ENCODE measurements at regions of chr5 and their contacts with region 1.

Region 1: GRCh38 chr5:55771175-55771655 is 33.4 kb downstream of the DDX4 start:
- DNase-seq: no peak
- H3K4me3 Mint-ChIP-seq: no peak overlapping the region
- H3K27ac Mint-ChIP-seq: no peak overlapping the region
- H3K4me1 Mint-ChIP-seq: peaks cover 11% of the 10 kb centered on the region
- H3K27me3 Mint-ChIP-seq: no peaks in the 10 kb centered on the region

Region 2: DNA sequence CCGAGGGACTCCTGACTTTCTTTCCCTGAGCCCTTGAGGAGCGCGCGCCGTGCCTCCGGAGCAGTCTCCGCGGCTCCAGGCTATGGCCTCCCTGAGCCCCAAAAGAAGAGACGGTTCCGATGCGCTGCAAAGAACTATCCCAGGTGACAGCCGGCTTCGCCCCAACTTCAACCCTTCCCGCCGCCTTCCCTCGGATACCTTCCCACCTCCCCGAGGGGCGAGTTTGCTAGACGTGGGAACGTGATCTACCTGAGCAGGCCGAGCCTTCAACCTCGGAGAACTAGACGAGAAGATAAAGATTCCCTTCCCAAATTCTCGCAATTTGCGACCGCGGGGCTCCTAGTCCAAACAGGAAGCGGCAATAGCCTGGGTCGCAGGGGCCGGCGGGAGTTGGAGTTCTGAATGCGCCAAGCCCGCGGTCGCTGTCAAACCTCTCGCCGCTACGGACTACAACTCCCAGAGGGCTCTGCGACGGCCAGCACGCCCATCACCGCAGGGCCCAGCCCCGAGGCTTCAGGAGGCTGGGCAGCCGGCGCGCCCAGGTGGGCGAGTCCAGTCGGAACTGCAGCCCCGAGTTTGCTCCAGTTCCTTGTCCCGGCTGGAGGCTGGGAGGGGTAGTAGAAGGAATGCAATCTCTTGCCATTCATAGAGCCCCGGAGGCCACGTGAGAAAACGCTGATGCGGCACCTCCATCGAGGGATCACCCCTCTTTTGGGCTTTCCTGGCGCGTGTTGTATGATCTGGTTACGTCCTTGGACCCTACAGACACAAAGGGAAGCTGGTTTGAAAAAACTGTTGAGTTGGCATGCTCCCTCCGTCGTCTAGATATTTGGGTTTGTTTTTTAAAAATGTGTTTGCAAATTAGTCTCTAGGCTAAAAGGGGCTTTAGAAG is 59.0 kb before region 1 on chr5 and contains the start of gene SLC38A9:
- CTCF ChIA-PET with region 1: no interaction called
- POLR2A ChIA-PET with region 1: no interaction called
- intact Hi-C with region 1: loop called (anchors 5 kb)
- DNase-seq: peak; percentile 96
- H3K4me3 Mint-ChIP-seq: peak within 1 kb of the TSS; percentile 96
- H3K27ac Mint-ChIP-seq: peak within 1 kb of the TSS; percentile 80
- H3K4me1 Mint-ChIP-seq: peaks cover 33% of the 10 kb centered on the region
- H3K27me3 Mint-ChIP-seq: no peaks in the 10 kb centered on the region
- total RNA-seq, gene SLC38A9: 14.2 to 15.0 TPM

Region 3: GRCh38 chr5:55758231-55758630 is 13.0 kb before region 1 on chr5:
- CTCF ChIA-PET with region 1: interaction called, 3 read pairs
- POLR2A ChIA-PET with region 1: no interaction called
- intact Hi-C with region 1: loop called (anchors 1 kb)
- DNase-seq: no peak
- H3K4me3 Mint-ChIP-seq: no peak overlapping the region
- H3K27ac Mint-ChIP-seq: peak overlapping the region; percentile 23
- H3K4me1 Mint-ChIP-seq: peaks cover 20% of the 10 kb centered on the region
- H3K27me3 Mint-ChIP-seq: peaks cover 17% of the 10 kb centered on the region

Region 4: DNA sequence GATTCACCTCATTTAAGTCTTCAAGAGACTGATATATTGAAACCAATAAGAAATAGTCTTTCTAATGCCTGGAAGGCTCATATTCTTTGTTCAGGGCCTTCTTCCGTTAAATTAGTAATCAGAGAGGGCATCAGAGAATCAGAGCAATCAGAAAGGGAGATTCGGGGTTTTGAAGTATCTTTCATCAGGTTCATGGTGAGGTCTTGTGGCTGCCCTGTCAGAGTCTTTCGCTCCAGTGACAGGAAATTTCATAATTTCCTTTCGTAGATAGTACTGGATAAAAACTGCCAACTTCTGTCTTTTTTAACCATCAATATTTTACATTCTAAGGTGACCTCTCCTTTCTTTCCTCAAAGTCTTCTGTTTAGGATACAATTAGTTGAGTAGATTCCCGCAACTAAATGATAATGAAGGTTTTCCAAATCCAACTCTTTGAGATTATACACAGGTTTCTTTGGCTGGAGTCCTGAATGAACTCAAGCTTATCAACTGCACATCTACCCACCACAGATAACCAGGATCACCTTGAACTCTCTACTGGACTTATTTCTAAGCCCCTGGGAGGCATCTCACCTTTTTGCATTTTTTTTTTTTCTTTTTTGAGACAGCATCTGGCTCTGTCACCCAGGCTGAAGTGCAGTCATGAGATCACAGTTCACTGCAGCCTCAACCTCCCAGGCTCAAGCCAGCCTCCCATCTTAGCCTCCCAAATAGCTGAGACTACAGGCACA is 85.5 kb after region 1 on chr5:
- CTCF ChIA-PET with region 1: no interaction called
- POLR2A ChIA-PET with region 1: no interaction called
- intact Hi-C with region 1: loop called (anchors 2 kb)
- DNase-seq: peak; percentile 46
- H3K4me3 Mint-ChIP-seq: no peak overlapping the region
- H3K27ac Mint-ChIP-seq: peak overlapping the region; percentile 32
- H3K4me1 Mint-ChIP-seq: peaks cover 34% of the 10 kb centered on the region
- H3K27me3 Mint-ChIP-seq: no peaks in the 10 kb centered on the region

Region 5: DNA sequence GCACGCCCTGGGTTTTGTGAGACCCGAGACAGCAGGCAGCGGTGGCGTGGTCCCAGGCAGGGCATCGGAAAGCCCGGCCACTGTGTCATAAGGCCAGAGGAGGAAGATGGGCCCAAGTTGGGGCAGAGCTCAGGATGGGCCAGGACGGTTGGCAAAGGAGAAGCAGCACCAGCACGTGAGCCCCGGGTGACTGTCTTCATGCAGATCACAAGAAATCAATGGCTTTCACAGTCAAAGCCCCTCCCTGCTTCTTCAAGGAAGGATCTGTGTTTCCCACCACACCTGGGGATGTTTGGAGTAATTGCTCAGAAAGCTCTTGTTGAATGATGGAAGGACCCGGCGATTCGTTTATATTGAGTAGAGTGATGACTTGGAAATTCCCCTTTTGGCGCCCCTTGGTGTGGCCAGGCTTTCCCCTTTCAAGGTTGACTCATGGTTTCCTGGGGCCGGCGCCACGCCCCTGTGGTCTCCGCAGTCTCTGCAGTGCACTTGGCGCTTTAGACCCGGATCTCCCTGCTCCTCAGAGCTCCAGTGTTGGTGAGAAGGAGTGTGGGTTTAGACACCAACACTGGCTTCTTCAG is 132.0 kb after region 1 on chr5:
- CTCF ChIA-PET with region 1: no interaction called
- POLR2A ChIA-PET with region 1: no interaction called
- intact Hi-C with region 1: loop called (anchors 5 kb)
- DNase-seq: peak; percentile 89
- H3K4me3 Mint-ChIP-seq: peak overlapping the region; percentile 24
- H3K27ac Mint-ChIP-seq: no peak overlapping the region
- H3K4me1 Mint-ChIP-seq: peaks cover 35% of the 10 kb centered on the region
- H3K27me3 Mint-ChIP-seq: peaks cover 2% of the 10 kb centered on the region

Measured in activated CD4-positive, alpha-beta memory T cell treated with anti-CD3 and anti-CD28 coated beads for 36 hours (primary cell).